CD14-positive monocyte (primary cell): ENCODE measurements at regions of chr19 and their contacts with region 1.

Region 1: DNA sequence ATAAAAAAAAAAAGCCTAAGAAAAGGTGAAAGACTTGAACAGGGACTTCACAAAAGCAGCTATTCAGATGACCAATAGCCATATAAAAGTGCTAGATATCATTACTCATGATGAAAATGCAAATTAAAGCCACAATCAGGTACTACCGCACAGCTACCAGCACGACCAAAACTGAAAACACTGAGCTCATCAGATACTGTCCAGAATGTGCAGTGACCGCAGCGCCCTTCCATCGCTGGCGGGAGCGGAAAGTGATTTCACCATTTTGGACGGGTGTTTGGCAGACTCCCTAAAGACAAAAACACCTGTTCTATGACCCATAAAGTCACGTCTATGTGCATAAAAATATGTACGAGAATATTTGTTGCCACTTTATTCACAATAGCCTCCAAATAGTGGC is 60.7 kb downstream of the SLC6A16 start:
- DNase-seq: no peak
- H3K4me3 ChIP-seq: no peak overlapping the region
- H3K4me3 Mint-ChIP-seq: no peak overlapping the region
- H3K27ac ChIP-seq: no peak overlapping the region
- H3K27ac Mint-ChIP-seq: no peak overlapping the region
- H3K4me1 ChIP-seq: no peaks in the 10 kb centered on the region
- H3K4me1 Mint-ChIP-seq: no peaks in the 10 kb centered on the region
- H3K27me3 ChIP-seq: no peaks in the 10 kb centered on the region
- H3K27me3 Mint-ChIP-seq: peaks cover 3 to 10% (median 3%) of the 10 kb centered on the region in 3 donors
- CTCF ChIP-seq: no peak

Region 2: DNA sequence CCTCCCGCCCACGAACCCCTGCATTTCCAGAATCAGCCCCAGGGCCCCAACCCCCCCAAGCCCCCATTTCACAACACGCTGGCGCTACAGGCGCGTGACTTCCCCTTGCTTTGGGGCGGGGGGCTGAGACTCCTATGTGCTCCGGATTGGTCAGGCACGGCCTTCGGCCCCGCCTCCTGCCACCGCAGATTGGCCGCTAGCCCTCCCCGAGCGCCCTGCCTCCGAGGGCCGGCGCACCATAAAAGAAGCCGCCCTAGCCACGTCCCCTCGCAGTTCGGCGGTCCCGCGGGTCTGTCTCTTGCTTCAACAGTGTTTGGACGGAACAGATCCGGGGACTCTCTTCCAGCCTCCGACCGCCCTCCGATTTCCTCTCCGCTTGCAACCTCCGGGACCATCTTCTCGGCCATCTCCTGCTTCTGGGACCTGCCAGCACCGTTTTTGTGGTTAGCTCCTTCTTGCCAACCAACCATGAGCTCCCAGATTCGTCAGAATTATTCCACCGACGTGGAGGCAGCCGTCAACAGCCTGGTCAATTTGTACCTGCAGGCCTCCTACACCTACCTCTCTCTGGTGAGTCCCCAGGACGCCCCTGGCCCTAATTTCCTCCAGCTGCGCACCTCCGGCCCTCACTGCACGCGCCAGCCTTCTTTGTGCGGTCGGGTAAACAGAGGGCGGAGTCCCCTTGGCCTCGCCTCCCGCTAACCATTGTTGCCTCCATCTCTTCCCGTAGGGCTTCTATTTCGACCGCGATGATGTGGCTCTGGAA is 299.0 kb before region 1 on chr19 and contains the start of gene FTL:
- intact Hi-C with region 1: no loop called
- DNase-seq: peak; percentile 98 to 99 (median 99)
- H3K4me3 ChIP-seq: peak within 1 kb of the TSS; percentile 86 to 99 (median 89)
- H3K4me3 Mint-ChIP-seq: peak within 1 kb of the TSS; percentile 99 to 100
- H3K27ac ChIP-seq: peak within 1 kb of the TSS; percentile 88 to 96
- H3K27ac Mint-ChIP-seq: peak within 1 kb of the TSS; percentile 95 to 99 (median 97)
- H3K4me1 ChIP-seq: peaks cover 74 to 81% of the 10 kb centered on the region in 2 donors
- H3K4me1 Mint-ChIP-seq: peaks cover 68% of the 10 kb centered on the region
- H3K27me3 ChIP-seq: no peaks in the 10 kb centered on the region
- H3K27me3 Mint-ChIP-seq: peaks cover 0 to 14% (median 0%) of the 10 kb centered on the region in 3 donors
- CTCF ChIP-seq: no peak
- polyA plus RNA-seq, gene FTL: 4,468 to 26,681 (median 23,650) TPM

Region 3: GRCh38 chr19:49210108-49210900 is 54.0 kb before region 1 on chr19:
- intact Hi-C with region 1: no loop called
- DNase-seq: peak; percentile 58 to 77 (median 60)
- H3K4me3 ChIP-seq: peak overlapping the region in 1 of 3 experiments; percentile 43
- H3K4me3 Mint-ChIP-seq: peak overlapping the region; percentile 45 to 57
- H3K27ac ChIP-seq: no peak overlapping the region
- H3K27ac Mint-ChIP-seq: peak overlapping the region in 5 of 7 donors; percentile 53 to 75 (median 64)
- H3K4me1 ChIP-seq: peaks cover 15 to 42% of the 10 kb centered on the region in 2 donors
- H3K4me1 Mint-ChIP-seq: peaks cover 27% of the 10 kb centered on the region
- H3K27me3 ChIP-seq: no peaks in the 10 kb centered on the region
- H3K27me3 Mint-ChIP-seq: peaks cover 2 to 3% (median 2%) of the 10 kb centered on the region in 3 donors
- CTCF ChIP-seq: peak; percentile 28

Region 4: DNA sequence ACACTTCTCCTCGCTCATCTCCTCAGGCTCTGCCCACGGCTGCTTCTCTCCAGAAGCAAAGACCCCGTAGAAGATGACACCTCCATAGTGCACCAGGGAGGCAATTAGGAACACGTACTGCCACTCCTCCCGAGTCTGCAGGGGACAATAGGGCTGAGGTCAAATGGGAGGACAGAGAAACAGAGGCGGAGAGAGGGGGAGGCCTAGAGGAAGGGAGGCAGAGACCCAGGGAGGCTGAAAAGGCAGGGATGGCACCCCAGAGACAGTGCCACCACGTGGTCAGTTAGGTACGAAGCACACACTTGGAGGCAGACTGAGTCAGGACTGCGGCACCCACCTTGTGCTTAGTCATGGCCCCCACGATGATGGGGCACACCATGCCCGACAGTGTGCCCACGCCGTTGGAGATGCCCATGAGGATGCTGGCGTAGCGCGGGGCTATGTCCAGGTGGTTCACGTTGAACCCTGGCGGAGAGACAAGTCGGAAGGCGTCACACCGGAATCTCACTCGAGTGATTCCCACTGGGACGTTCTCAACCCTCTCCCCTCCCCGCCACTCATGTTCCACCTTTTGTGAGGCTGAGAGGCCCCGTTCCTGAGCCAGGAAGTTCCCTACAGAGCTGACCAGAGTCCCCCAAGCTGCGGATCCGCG is 166.5 kb after region 1 on chr19:
- intact Hi-C with region 1: loop called in 1 of 2 experiments (anchors 10 kb)
- DNase-seq: no peak
- H3K4me3 ChIP-seq: no peak overlapping the region
- H3K4me3 Mint-ChIP-seq: peak overlapping the region in 1 of 2 donors; percentile 80
- H3K27ac ChIP-seq: no peak overlapping the region
- H3K27ac Mint-ChIP-seq: peak overlapping the region in 1 of 7 donors; percentile 64
- H3K4me1 ChIP-seq: peaks cover 0 to 6% of the 10 kb centered on the region in 2 donors
- H3K4me1 Mint-ChIP-seq: peaks cover 24% of the 10 kb centered on the region
- H3K27me3 ChIP-seq: peaks cover 57 to 100% of the 10 kb centered on the region in 2 donors
- H3K27me3 Mint-ChIP-seq: peaks cover 99 to 100% (median 99%) of the 10 kb centered on the region in 3 donors
- CTCF ChIP-seq: no peak